ENCODE measurements at regions of chr7 and their contacts with region 1.

Region 1: DNA sequence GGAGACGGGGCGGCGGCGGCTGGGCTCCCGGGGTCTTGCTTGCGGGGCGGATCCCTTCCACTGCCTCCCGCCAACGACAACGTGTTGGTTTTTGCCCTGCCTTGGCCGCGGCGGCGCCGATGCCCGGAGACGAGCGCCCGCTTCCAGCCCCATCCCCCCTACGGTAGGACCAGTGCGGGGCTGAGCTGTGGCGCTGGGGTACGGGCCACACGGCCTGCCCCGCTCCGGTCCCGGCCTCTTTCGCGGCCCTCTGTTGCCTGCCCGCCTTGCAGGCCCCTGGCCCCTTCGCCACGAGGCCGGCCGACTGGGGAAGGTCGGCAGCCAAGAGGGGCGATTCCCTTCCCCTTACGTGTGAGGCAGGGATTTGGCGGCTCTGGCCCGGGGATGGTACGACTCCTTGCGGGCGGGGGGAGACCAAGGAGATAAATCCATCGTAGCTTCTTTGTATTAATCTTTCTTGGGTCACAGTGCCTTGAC is 488 bp downstream of the EIF4H start:
- DNase-seq: no peak
- CTCF ChIP-seq: no peak

Region 2: GRCh38 chr7:74083117-74083876 is 91.3 kb before region 1 on chr7 and contains the start of gene LIMK1:
- in situ Hi-C with region 1: loop called (anchors 25 kb)
- DNase-seq: peak; percentile 99
- CTCF ChIP-seq: no peak